ENCODE measurements at regions of chr5 and their contacts with region 1.

Region 1: GRCh38 chr5:173204185-173204979 is 30.6 kb downstream of the NKX2-5 start:
- DNase-seq: peak in 4 of 14 experiments; percentile 38 to 61 (median 54)
- ATAC-seq: peak; percentile 52
- H3K4me3 ChIP-seq: no peak overlapping the region
- H3K4me3 Mint-ChIP-seq: no peak overlapping the region
- H3K27ac ChIP-seq: no peak overlapping the region
- H3K27ac Mint-ChIP-seq: no peak overlapping the region
- H3K4me1 ChIP-seq: no peaks in the 10 kb centered on the region
- H3K4me1 Mint-ChIP-seq: no peaks in the 10 kb centered on the region
- H3K27me3 ChIP-seq: peaks cover 22 to 23% of the 10 kb centered on the region in 2 experiments
- H3K27me3 Mint-ChIP-seq: peaks cover 59% of the 10 kb centered on the region
- CTCF ChIP-seq: peak; percentile 62

Region 2: DNA sequence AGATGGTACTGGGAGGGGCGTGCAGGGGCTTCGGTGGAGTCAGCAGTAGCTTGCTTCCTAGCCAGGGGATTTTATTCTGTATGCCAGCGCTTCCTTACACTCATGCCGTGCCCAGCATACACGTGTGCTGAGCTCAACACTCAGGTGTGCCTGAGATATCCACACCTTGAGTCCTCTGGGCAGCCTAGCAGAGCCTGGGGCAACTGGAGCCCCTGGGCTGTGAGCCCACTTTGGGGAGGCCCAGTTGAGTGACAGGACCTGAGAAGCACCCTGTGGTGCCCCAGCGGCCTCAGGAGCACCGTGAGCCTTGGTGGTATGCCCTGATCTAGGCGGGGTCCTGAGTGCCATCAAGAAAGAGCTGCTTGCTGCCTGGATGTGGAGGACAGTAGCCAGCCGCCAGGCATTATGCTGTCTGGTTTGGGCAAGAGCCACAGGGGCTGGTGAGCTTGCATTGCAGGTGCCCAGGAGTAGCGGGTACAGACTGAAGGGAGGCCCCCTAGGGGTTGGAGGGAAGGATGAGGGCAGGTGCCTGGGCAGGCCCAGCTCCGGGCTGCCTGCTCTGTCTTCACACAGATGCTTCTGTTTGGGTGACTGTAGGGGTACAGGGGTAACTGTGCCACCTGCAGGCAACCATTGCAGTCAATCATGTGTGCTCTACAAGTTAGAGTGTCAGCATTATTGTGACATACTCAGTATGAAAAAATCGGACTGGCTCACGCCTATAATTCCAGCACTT is 17.2 kb before region 1 on chr5:
- CTCF ChIA-PET with region 1: no interaction called
- POLR2A ChIA-PET with region 1: no interaction called
- intact Hi-C with region 1: no loop called
- DNase-seq: peak in 3 of 14 experiments; percentile 9 to 35 (median 14)
- ATAC-seq: peak; percentile 29
- H3K4me3 ChIP-seq: no peak overlapping the region
- H3K4me3 Mint-ChIP-seq: no peak overlapping the region
- H3K27ac ChIP-seq: no peak overlapping the region
- H3K27ac Mint-ChIP-seq: no peak overlapping the region
- H3K4me1 ChIP-seq: no peaks in the 10 kb centered on the region
- H3K4me1 Mint-ChIP-seq: no peaks in the 10 kb centered on the region
- H3K27me3 ChIP-seq: no peaks in the 10 kb centered on the region
- H3K27me3 Mint-ChIP-seq: peaks cover 2% of the 10 kb centered on the region
- CTCF ChIP-seq: no peak

Region 3: DNA sequence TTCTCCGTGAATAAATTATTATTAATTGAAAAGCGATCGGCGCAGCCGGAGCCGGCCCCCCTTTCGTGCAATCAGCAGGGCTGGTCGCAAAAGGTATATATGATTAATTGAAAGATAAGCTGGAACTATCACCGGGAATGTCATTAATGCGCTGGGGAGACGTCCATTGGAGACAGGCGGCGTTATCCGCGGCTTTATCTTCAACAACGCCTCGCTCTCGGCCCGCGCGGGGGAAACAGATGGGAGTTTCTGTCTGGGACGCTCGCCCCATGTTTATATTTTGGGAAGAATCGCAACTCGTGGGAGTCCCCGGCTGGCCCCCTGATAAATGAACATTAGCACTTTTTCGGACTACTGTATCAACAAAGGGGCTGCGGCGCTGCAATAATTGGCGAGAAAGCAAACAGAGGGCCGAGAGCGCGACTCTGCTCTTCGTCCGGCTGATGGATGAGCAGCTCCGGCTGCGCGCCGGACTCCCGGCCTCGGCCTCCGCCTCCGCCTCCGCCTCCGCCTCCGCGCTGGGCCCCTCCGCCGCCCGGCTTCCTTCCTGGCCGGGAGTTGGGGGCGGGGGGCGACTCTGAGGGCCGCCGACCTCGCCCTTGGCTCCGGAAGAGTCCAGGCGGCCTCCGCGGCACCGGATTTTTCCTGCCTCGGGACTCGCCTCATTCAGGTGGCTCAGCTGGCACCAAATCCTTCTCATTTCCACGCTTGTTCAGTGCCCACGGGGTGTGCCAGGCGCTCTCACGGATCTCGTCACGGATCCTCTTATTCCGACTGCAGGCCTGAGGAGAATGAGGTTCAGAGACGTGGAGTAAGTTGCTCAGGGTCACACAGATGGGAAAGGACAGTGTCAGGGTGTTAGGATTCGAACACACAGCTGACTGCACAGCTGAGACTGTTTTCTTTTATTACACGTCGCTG is 34.2 kb after region 1 on chr5:
- CTCF ChIA-PET with region 1: no interaction called
- POLR2A ChIA-PET with region 1: no interaction called
- intact Hi-C with region 1: no loop called
- DNase-seq: no peak
- ATAC-seq: no peak
- H3K4me3 ChIP-seq: no peak overlapping the region
- H3K4me3 Mint-ChIP-seq: peak overlapping the region; percentile 65
- H3K27ac ChIP-seq: no peak overlapping the region
- H3K27ac Mint-ChIP-seq: no peak overlapping the region
- H3K4me1 ChIP-seq: peaks cover 33% of the 10 kb centered on the region
- H3K4me1 Mint-ChIP-seq: peaks cover 56% of the 10 kb centered on the region
- H3K27me3 ChIP-seq: peaks cover 82 to 100% of the 10 kb centered on the region in 2 experiments
- H3K27me3 Mint-ChIP-seq: peaks cover 94% of the 10 kb centered on the region
- CTCF ChIP-seq: no peak

Region 4: DNA sequence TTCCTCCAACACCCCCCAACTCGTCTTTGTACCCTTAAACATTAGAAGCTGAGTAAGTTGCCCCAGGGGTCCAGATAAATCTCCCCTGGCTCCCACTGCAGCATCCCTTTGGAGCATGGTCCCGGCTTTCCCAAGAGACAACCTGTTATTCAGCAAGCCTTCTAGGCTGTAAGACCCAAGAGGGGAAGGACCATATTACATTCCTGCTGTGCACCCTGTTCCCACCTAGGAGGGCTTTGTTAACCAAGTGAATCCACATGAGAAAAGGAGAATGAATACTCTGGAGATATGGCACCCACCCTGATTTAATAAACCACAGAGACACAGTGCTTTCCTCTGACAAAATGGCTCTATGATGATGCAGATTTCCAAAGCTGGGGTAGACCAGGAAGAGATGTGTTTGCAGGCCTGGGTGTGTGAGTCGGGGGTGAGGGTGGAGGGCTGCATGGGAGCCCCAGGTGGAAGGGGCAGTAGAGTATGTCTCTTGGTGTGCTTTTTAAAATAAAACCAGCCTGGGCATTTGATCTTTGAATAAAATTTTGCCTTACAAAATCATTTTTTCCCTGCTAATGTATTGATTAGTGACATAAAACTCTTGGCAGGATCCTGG is 1914.4 kb after region 1 on chr5:
- CTCF ChIA-PET with region 1: no interaction called
- POLR2A ChIA-PET with region 1: no interaction called
- intact Hi-C with region 1: loop called in 1 of 2 experiments (anchors 10 kb)
- DNase-seq: no peak
- ATAC-seq: no peak
- H3K4me3 ChIP-seq: no peak overlapping the region
- H3K4me3 Mint-ChIP-seq: no peak overlapping the region
- H3K27ac ChIP-seq: no peak overlapping the region
- H3K27ac Mint-ChIP-seq: no peak overlapping the region
- H3K4me1 ChIP-seq: no peaks in the 10 kb centered on the region
- H3K4me1 Mint-ChIP-seq: no peaks in the 10 kb centered on the region
- H3K27me3 ChIP-seq: peaks cover 0 to 6% of the 10 kb centered on the region in 2 experiments
- H3K27me3 Mint-ChIP-seq: peaks cover 31% of the 10 kb centered on the region
- CTCF ChIP-seq: no peak

Measured in CD4-positive, alpha-beta T cell (primary cell).